ENCODE measurements at regions of chr2 and their contacts with region 1.

Region 1: DNA sequence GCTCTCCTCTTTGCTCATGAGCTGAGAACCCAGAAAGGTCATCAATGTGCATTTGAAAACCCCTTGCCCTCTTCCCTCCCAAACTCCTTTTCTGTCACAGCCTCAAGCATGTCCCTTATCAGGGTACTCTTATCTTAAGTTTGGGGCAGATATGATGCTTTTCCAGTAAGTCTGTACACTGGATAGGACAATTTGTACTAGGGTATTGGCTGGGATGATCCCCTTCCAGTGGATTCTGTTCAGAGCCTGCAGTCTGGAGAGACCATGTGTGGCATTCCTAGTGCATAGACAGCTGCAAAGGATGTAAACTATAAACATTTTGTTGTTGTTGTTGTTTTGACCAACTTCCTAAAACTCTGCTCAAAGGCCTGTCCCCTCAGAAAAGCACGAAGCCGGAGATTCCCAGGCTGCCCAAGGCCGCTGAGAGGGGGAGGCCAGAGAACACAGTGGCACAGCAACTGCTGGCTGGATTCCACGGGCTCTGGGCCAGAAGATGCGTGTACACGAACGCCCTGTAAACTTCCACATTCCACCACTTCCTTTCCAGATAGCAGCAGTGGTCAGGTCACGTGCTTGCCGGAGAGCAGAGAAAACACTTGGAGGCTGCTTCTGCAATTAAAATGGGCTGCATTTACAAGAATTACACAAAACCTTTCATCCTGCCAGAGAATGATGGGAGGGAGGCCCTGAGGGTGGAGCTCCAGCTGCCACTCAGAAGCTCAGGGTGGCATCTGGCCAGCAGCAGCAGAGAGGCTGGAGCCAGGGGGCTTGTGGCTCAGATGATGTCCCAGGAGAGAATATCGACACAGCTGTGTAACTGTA is 42.1 kb downstream of the BMP10 start:
- DNase-seq: no peak
- ATAC-seq: peak; percentile 29
- H3K4me3 Mint-ChIP-seq: peak overlapping the region; percentile 8
- H3K27ac Mint-ChIP-seq: peak overlapping the region; percentile 76
- H3K4me1 Mint-ChIP-seq: peaks cover 78% of the 10 kb centered on the region
- H3K27me3 Mint-ChIP-seq: no peaks in the 10 kb centered on the region
- CTCF ChIP-seq: no peak

Region 2: DNA sequence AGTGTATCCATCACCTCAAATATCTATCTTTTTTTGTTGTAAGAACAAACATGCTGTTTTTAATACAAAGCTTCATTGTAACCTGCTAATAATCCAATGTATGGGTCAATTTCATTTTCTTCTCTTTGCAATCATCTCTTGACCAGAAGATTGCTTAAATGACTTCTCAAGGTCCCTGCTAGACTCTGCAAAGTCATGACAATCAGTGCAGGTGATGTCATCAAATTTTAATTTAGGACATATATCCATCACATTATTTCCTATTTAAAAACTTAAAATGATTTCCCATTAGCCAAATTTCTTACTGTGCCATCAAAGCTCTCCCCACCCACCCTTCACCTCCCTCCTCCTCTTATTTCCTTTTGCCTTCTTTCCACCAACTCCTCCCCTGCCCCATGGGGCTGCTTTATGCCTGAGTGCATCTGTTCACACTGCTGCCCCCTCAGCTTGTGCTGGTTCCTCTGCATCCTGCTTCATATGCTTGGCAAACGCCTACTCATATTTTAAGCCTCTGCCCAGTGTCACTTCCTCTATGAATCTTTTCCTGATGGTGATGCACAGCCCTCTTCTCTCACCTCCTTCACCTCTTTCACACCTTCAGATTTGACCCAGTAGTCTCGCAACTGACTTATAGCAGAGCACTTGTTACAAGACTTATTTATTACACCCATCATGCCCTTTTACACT is 443.7 kb before region 1 on chr2:
- CTCF ChIA-PET with region 1: no interaction called
- POLR2A ChIA-PET with region 1: no interaction called
- intact Hi-C with region 1: loop called (anchors 10 kb)
- DNase-seq: no peak
- ATAC-seq: peak; percentile 69
- H3K4me3 Mint-ChIP-seq: peak overlapping the region; percentile 29
- H3K27ac Mint-ChIP-seq: peak overlapping the region; percentile 91
- H3K4me1 Mint-ChIP-seq: peaks cover 97% of the 10 kb centered on the region
- H3K27me3 Mint-ChIP-seq: no peaks in the 10 kb centered on the region
- CTCF ChIP-seq: no peak

Region 3: DNA sequence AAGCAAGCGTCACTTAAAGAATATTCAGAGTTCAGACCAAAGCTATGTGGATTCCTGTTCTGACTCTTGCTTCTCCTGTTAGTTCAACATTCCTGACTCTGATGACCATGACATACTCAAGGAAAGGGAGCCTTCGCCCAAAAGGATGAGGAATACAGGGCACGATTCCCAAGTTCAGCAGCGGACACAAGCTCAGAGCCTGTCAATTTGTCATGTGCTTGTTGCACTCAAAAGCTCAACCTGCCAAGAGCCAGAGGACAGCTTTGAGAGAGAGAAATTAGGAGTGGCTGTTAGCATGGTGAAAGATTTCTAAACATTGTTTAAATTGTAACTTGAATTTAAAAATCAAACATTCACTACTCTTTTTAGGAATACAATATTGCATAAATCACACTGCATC is 328.4 kb before region 1 on chr2:
- CTCF ChIA-PET with region 1: no interaction called
- POLR2A ChIA-PET with region 1: no interaction called
- intact Hi-C with region 1: no loop called
- DNase-seq: no peak
- ATAC-seq: no peak
- H3K4me3 Mint-ChIP-seq: no peak overlapping the region
- H3K27ac Mint-ChIP-seq: no peak overlapping the region
- H3K4me1 Mint-ChIP-seq: no peaks in the 10 kb centered on the region
- H3K27me3 Mint-ChIP-seq: no peaks in the 10 kb centered on the region
- CTCF ChIP-seq: no peak

Region 4: GRCh38 chr2:68734688-68735525 is 94.2 kb before region 1 on chr2 and contains the start of gene ARHGAP25:
- CTCF ChIA-PET with region 1: no interaction called
- POLR2A ChIA-PET with region 1: interaction called, 7 read pairs
- intact Hi-C with region 1: loop called (anchors 1 kb)
- DNase-seq: peak; percentile 45
- ATAC-seq: peak; percentile 74
- H3K4me3 Mint-ChIP-seq: no peak within 1 kb of the TSS
- H3K27ac Mint-ChIP-seq: no peak within 1 kb of the TSS
- H3K4me1 Mint-ChIP-seq: peaks cover 37% of the 10 kb centered on the region
- H3K27me3 Mint-ChIP-seq: no peaks in the 10 kb centered on the region
- CTCF ChIP-seq: no peak
- total RNA-seq, gene ARHGAP25: 324 and 336 TPM in 2 replicates

Region 5: DNA sequence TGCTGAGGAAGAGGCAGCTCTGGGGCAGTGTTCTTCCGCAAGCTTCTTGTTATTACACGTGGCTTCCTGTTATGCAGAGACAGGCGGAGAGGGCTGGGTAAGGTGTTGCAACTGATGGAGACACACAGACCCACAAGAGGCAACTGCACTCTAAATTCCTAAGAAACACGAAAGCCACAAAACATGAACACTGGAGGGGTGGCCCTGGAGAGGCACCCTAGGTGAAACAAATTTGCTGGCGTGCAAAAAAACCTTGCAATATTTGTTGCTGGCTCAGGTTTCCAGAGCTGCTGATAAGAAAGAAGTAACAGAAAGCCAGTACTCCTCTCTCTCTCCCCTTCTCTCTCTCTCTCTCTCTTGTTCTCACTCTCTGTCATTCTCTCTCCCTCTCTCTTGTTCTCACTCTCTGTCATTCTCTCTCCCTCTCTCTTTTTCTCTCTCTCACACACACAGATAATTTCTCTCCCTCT is 62.7 kb before region 1 on chr2:
- CTCF ChIA-PET with region 1: no interaction called
- POLR2A ChIA-PET with region 1: interaction called, 7 read pairs
- intact Hi-C with region 1: loop called (anchors 1 kb)
- DNase-seq: no peak
- ATAC-seq: peak; percentile 41
- H3K4me3 Mint-ChIP-seq: peak overlapping the region; percentile 67
- H3K27ac Mint-ChIP-seq: peak overlapping the region; percentile 96
- H3K4me1 Mint-ChIP-seq: peaks cover 98% of the 10 kb centered on the region
- H3K27me3 Mint-ChIP-seq: no peaks in the 10 kb centered on the region
- CTCF ChIP-seq: no peak

Region 6: DNA sequence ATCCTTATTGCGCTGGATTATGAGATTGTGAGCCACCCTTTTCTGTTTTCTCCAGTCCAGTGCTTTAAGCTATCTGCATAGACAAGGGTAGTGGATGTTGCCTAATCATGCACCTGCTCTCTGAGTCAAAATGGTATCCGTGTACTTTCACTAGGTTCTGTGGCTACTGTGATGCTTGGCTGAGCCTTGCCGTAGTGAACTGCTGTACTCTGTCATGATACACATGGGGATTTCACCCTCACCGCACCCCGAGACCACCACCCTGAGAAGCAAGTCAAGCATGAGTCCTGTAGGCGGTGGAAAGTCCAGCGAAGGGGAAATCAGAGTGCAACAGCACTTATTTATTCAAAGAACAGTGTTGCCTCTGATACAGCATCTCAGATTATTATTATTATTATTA is 39.5 kb before region 1 on chr2:
- CTCF ChIA-PET with region 1: no interaction called
- POLR2A ChIA-PET with region 1: interaction called, 156 read pairs
- intact Hi-C with region 1: loop called (anchors 1 kb)
- DNase-seq: peak; percentile 75
- ATAC-seq: peak; percentile 87
- H3K4me3 Mint-ChIP-seq: peak overlapping the region; percentile 61
- H3K27ac Mint-ChIP-seq: no peak overlapping the region
- H3K4me1 Mint-ChIP-seq: peaks cover 47% of the 10 kb centered on the region
- H3K27me3 Mint-ChIP-seq: no peaks in the 10 kb centered on the region
- CTCF ChIP-seq: no peak

Region 7: GRCh38 chr2:68807821-68808266 is 21.3 kb before region 1 on chr2:
- CTCF ChIA-PET with region 1: interaction called, 5 read pairs
- POLR2A ChIA-PET with region 1: interaction called, 5 read pairs
- intact Hi-C with region 1: loop called (anchors 1 kb)
- DNase-seq: no peak
- ATAC-seq: no peak
- H3K4me3 Mint-ChIP-seq: no peak overlapping the region
- H3K27ac Mint-ChIP-seq: peak overlapping the region; percentile 87
- H3K4me1 Mint-ChIP-seq: peaks cover 64% of the 10 kb centered on the region
- H3K27me3 Mint-ChIP-seq: no peaks in the 10 kb centered on the region
- CTCF ChIP-seq: no peak

Region 8: DNA sequence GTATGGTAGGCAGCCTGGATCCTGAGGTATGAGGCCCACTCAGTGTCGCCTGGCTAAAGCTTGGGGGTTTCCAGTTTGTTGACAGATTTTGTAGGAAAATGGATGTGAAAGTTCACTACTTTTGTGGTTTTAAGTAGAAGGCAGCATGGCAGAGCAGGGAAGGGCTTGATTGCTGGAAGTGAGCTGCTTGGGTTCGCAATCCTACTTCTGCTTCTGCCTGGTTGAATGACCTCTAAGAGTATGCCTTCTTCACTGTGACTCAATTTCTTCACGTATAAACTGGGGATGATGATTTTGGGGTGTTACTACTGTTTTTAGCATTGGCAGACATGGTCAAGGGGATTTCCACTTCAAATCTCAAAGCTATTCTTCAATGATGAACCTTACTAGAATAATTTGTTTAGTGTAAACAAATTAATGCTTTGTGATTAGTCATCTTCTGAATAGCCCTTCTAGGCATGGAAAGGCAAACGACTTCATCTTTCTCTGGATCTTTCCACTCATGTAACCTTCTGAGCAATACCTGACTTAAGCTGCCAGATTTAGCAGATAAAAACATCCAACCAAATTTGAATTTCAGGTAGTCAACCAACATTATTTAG is 28.9 kb after region 1 on chr2:
- CTCF ChIA-PET with region 1: interaction called, 3 read pairs
- POLR2A ChIA-PET with region 1: interaction called, 8 read pairs
- intact Hi-C with region 1: loop called (anchors 2 kb)
- DNase-seq: no peak
- ATAC-seq: peak; percentile 94
- H3K4me3 Mint-ChIP-seq: no peak overlapping the region
- H3K27ac Mint-ChIP-seq: peak overlapping the region; percentile 65
- H3K4me1 Mint-ChIP-seq: peaks cover 19% of the 10 kb centered on the region
- H3K27me3 Mint-ChIP-seq: no peaks in the 10 kb centered on the region
- CTCF ChIP-seq: no peak

Measured in activated B cell treated with CpG ODN at 0.5 μM for 24 hours (primary cell).